ENCODE measurements at regions of chr6 and their contacts with region 1.

Region 1: DNA sequence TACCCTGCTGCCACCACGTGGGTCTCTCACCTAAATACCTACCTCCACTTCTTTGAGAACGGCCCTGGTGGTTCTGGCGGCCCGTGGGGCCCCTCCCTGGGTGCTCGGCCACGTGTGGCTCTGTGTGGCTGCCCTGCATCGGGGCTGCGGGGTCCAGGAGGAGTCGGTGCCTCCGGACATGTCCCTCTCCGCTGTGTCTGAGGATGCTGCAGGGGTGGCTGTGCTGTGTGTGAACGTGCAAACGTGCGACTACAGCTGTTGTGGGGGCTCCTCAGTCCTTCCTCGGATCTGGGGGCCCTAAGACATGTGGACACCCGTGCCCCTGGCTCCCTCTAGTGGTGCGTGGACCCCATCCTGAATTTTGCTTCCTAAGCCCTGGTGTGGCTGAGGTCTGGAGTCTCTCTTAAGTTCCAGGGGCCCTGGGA is 691.8 kb downstream of the QKI start:
- DNase-seq: peak; percentile 70 to 79
- ATAC-seq: peak; percentile 26 to 70 (median 58)
- H3K4me3 ChIP-seq: peak overlapping the region in 8 of 10 donors; percentile 10 to 36 (median 30)
- H3K27ac ChIP-seq: peak overlapping the region; percentile 80 to 97 (median 90)
- H3K4me1 ChIP-seq: peaks cover 3 to 74% (median 37%) of the 10 kb centered on the region in 9 donors
- H3K27me3 ChIP-seq: no peaks in the 10 kb centered on the region
- CTCF ChIP-seq: peak; percentile 43 to 73 (median 67)

Region 2: DNA sequence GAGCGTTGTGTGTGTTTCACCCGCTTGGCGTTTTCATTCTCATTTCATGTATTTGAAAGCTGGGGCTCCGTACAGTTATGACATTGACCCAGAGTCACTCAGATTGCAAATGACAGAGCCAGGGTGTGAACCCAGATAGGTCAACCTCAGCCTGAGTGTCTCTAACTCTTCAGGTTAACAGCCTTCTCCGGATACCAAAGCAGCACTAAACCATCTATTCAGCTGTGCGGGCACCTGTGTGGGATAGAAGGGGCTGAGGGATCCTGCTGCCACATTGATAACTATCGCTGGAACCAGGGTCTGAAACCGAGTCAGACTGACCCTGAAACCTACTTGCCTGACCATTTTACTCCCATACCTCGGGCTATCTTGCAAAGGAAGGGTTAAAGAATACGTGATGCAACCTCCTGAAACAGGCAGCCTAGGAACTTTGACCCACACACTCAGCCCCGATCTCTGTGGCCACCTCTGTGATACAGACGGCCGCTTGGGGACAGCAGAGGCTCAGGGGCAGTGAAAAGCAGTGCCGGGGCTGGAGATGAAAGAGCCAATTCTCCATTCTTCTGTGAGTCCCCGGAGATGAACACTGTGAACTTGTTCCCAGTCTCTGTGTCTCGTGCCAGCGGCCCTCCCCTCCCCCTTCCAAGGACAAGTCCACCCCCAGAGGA is 925.3 kb before region 1 on chr6:
- intact Hi-C with region 1: loop called in 7 of 10 experiments (anchors 5 to 10 kb)
- DNase-seq: peak; percentile 82 to 83
- ATAC-seq: peak; percentile 94 to 97 (median 96)
- H3K4me3 ChIP-seq: peak overlapping the region in 5 of 10 donors; percentile 2 to 31 (median 26)
- H3K27ac ChIP-seq: peak overlapping the region in 6 of 10 donors; percentile 5 to 33 (median 25)
- H3K4me1 ChIP-seq: peaks cover 4 to 36% (median 23%) of the 10 kb centered on the region in 9 donors
- H3K27me3 ChIP-seq: no peaks in the 10 kb centered on the region
- CTCF ChIP-seq: peak; percentile 74 to 96 (median 91)

Region 3: DNA sequence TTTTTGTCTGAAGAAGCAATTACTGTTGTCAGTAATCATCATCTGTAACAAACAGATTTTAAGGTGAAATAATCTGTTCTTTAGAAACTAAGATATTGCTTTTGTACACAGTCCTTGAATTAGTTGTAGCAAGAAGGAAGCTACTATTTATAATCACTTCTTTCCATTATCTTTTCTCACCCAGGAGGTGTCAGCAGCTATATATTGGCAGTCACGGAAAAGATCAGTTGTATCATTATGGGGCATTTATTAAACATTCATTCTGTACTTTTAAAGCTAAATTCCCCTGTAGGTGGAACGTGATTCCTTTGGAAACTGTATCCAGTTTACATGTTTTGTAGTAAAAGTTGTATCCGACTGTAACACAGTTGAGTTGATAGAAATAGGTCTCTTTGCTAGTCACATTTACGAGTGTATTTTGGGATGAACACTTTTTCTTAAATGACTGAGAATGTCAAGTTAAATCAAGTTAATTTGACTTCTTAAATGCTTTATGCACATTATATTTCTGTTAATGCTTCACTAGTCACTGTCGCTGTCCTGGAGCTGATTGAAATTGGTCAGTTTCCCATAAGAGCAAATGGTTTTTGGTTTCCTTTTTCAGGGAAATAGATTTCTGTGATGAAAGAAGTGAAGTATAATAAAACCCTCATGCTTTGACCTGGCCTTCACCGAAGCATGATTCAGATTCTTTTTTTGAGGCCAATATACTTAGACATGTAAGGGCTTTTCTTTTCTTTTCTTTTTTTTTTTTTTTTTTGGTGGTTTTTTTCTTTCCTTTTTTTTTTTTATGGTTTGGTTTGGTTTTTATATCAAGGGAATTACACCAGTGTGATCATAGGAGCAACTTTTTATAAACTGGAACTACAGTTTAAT is 686.7 kb before region 1 on chr6:
- intact Hi-C with region 1: loop called in 9 of 10 experiments (anchors 2 to 10 kb)
- DNase-seq: no peak
- ATAC-seq: no peak
- H3K4me3 ChIP-seq: peak overlapping the region; percentile 5 to 93 (median 89)
- H3K27ac ChIP-seq: peak overlapping the region; percentile 67 to 100 (median 99)
- H3K4me1 ChIP-seq: peaks cover 5 to 78% (median 53%) of the 10 kb centered on the region in 9 donors
- H3K27me3 ChIP-seq: no peaks in the 10 kb centered on the region
- CTCF ChIP-seq: no peak

Region 4: GRCh38 chr6:163579880-163580295 is 526.5 kb before region 1 on chr6:
- intact Hi-C with region 1: loop called in 3 of 10 experiments (anchors 5 to 10 kb)
- DNase-seq: no peak
- ATAC-seq: peak in 5 of 8 donors; percentile 30 to 46 (median 35)
- H3K4me3 ChIP-seq: no peak overlapping the region
- H3K27ac ChIP-seq: peak overlapping the region in 7 of 10 donors; percentile 3 to 51 (median 25)
- H3K4me1 ChIP-seq: peaks cover 0 to 48% (median 17%) of the 10 kb centered on the region in 9 donors
- H3K27me3 ChIP-seq: no peaks in the 10 kb centered on the region
- CTCF ChIP-seq: peak in 3 of 9 donors; percentile 37 to 47 (median 41)

Region 5: GRCh38 chr6:163837691-163838431 is 268.5 kb before region 1 on chr6:
- intact Hi-C with region 1: loop called in 1 of 10 experiments (anchors 5 kb)
- DNase-seq: peak in 1 of 2 donors; percentile 16
- ATAC-seq: peak in 7 of 8 donors; percentile 69 to 78 (median 75)
- H3K4me3 ChIP-seq: peak overlapping the region in 5 of 10 donors; percentile 16 to 30 (median 17)
- H3K27ac ChIP-seq: peak overlapping the region; percentile 18 to 73 (median 60)
- H3K4me1 ChIP-seq: peaks cover 0 to 30% (median 14%) of the 10 kb centered on the region in 9 donors
- H3K27me3 ChIP-seq: no peaks in the 10 kb centered on the region
- CTCF ChIP-seq: no peak

Region 6: DNA sequence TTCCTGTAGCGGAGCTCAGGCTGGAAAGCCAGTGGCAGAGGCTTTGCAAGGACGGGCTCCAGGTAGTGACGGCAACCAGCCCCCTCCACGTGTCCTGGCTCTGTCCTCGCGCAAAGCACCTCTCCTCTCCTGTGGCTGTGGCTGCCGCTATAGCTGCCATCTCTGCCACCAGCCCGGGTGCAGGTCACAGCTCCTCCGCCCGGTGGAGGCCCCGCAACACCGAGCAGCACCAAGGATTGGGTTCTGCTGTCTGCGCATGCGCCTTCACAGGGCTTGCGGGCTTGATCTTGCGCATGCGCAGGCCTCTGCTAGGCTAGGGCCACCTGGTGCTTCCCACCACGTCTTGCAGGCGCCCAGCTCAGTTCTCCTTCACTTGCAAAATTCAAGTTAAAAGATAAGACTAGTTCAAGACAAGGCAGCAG is 66.4 kb before region 1 on chr6:
- intact Hi-C with region 1: no loop called
- DNase-seq: no peak
- ATAC-seq: peak in 6 of 8 donors; percentile 15 to 84 (median 60)
- H3K4me3 ChIP-seq: peak overlapping the region in 1 of 10 donors; percentile 31
- H3K27ac ChIP-seq: no peak overlapping the region
- H3K4me1 ChIP-seq: peaks cover 0 to 27% (median 6%) of the 10 kb centered on the region in 9 donors
- H3K27me3 ChIP-seq: no peaks in the 10 kb centered on the region
- CTCF ChIP-seq: peak in 2 of 9 donors; percentile 16 to 43

Region 7: DNA sequence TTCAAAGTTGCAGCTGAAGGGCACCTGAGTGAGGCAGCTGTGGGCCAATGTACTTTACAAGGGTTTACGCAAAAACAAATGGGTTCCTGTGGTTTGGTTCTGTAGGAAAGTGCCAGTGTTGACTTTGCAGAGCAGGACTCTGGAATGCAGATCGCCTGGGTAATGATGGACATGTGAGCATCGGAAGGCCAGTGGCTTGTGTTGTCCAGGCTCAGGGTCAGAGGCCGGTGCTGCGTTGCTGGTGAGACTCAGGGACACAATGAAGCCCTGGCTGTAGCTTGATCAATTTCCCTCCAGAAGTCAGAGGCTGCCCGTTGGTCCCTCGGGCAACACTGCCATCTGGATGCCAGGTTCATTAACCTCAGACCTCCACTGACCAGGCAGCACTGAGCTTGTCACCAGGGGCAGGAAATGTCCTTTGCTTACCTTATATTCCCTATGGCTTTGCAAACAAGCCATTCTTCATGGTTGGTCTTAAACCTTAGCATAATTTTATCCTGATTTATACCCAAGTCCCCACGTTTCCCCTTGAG is 61.6 kb after region 1 on chr6:
- intact Hi-C with region 1: loop called in 1 of 10 experiments (anchors 5 kb)
- DNase-seq: no peak
- ATAC-seq: peak in 6 of 8 donors; percentile 44 to 76 (median 67)
- H3K4me3 ChIP-seq: no peak overlapping the region
- H3K27ac ChIP-seq: no peak overlapping the region
- H3K4me1 ChIP-seq: peaks cover 0 to 5% (median 0%) of the 10 kb centered on the region in 9 donors
- H3K27me3 ChIP-seq: no peaks in the 10 kb centered on the region
- CTCF ChIP-seq: peak in 5 of 9 donors; percentile 12 to 42 (median 37)

Measured in heart right ventricle (tissue), 16 donors.